ENCODE measurements at regions of chr19 and their contacts with region 1.

Region 1: DNA sequence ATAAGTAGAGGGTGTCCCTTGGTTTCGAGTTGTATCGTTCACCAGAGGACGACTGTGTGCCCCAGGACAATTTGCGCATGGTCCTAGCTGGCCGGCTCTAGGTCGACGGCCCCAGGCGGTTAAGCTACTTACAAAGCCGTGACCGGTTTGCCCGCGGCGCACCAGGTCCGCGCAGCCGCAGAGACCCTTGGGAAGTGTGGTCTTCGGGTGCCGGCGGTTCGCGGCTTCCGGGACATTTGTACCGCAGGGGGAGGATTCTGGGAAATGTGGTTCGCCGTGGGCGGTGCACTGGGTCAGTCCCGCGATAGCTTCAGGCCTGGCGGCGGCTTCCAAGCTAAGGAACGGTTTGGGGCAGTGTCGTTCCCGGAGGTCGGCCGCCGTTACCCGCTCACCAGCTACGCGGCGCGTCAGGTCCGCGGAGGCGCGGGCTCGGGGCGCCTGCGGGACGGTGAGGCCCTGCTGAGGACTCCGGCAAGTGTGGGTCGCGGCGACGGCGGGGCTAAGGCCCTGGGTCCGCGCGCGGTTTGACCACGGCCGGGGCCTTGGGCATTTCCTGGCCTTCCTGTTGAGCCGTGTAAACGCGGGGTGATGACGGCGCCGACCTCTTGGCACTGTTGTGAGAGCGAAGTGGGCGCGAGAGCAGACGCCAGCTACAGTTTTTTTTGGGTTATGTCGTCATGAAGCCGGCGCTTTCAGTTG is at the start of gene ZNF302:
- DNase-seq: peak in 1 of 2 donors; percentile 98
- H3K4me3 ChIP-seq: peak within 1 kb of the TSS; percentile 75 to 85
- H3K27ac ChIP-seq: peak within 1 kb of the TSS; percentile 93
- H3K4me1 ChIP-seq: peaks cover 29% of the 10 kb centered on the region
- H3K27me3 ChIP-seq: no peaks in the 10 kb centered on the region
- CTCF ChIP-seq: peak in 1 of 3 experiments; percentile 8
- POLR2A ChIP-seq: peak in 1 of 2 donors; percentile 21
- total RNA-seq, gene ZNF302: 17.2 TPM

Region 2: GRCh38 chr19:34712395-34713261 is 35.1 kb after region 1 on chr19:
- intact Hi-C with region 1: no loop called
- DNase-seq: no peak
- H3K4me3 ChIP-seq: no peak overlapping the region
- H3K27ac ChIP-seq: no peak overlapping the region
- H3K4me1 ChIP-seq: no peaks in the 10 kb centered on the region
- H3K27me3 ChIP-seq: no peaks in the 10 kb centered on the region
- CTCF ChIP-seq: peak; percentile 71 to 96 (median 84)
- POLR2A ChIP-seq: no peak

Region 3: DNA sequence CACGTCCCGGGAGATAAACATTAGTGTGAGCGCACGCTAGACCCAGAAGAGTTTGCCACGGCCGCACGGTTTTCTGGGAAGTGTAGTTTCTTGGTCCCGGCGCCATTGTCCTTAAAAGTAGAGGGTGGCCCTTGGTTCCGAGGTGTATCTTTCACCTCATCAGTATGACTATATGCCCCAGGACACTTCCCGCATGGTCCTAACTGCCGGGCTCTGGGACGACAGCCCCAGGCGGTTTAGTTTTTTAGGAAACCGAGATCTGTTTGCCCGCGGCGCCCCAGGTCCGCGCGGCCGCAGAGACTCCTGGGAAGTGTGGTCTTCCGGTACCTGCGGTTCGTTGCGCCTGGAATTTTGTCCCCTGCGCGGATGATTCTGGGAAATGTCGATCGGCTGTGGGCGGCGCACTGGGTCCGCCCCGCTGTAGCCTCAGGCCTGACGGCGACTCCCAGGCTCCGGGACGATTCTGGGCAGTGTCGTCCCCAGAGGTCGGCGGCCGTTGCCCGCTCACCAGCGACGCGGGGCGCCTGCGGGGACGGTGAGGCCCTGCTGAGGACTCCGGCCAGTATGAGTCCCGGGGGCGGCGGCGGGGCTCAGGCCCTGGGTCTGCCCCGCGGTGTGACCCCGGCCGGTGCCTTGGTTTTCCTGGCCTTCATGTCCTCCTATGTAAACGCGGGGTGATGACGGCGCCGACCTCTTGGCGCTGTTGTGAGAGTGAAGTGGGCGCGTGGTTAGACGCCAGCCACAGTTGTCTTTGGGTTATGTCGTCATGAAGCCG is 56.5 kb after region 1 on chr19 and contains the start of gene ZNF181:
- intact Hi-C with region 1: loop called (anchors 2 kb)
- DNase-seq: peak in 1 of 2 donors; percentile 92
- H3K4me3 ChIP-seq: peak within 1 kb of the TSS; percentile 69 to 74
- H3K27ac ChIP-seq: peak within 1 kb of the TSS; percentile 96
- H3K4me1 ChIP-seq: peaks cover 32% of the 10 kb centered on the region
- H3K27me3 ChIP-seq: no peaks in the 10 kb centered on the region
- CTCF ChIP-seq: no peak
- POLR2A ChIP-seq: peak in 1 of 2 donors; percentile 6
- total RNA-seq, gene ZNF181: 25.5 TPM

Region 4: DNA sequence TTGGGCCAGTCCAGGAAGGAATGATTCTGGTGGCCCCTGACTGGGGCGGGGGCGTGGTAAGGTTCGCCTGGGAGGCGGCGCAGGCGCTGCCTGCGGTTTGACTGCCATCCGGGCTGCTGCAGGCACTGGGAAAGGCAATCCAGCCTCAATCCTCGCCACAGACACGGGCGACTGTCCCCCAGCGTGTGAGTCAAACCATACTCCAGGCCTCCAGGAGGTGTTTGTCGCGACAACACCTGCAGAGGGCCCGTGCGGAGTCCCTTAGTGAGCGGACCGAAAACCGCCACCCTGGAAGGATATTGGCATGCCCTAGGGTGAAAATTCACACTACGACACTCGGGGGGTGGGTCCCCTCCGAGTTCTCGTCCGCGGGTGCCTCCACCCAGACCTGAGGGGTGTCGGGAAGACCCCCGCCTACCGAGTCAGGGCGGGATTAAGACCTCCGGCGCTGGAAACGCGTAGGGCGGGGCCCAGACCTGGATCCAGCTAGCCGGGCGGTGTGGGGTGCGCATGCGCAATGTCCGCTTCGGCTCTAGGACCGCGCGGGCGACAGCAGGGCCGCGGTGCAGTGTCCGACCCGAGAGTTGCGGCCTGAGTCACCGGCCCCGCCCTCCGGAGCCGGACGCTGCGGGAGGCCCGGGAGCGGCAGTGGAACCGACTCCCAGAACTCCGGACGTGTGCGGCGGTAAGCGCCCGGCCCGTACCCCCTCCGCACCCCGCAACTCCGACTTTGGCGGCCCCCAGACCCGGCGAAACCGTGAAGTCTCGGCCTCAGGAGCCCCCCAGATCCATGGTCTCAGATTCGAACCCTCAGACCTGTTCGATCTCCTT is 1462.2 kb after region 1 on chr19 and contains the start of gene CAPNS1:
- intact Hi-C with region 1: loop called (anchors 10 kb)
- DNase-seq: peak in 1 of 2 donors; percentile 94
- H3K4me3 ChIP-seq: peak within 1 kb of the TSS; percentile 82 to 88
- H3K27ac ChIP-seq: peak within 1 kb of the TSS; percentile 98
- H3K4me1 ChIP-seq: peaks cover 34% of the 10 kb centered on the region
- H3K27me3 ChIP-seq: no peaks in the 10 kb centered on the region
- CTCF ChIP-seq: peak in 1 of 3 experiments; percentile 18
- POLR2A ChIP-seq: peak; percentile 60 to 96
- total RNA-seq, gene CAPNS1: 181 TPM

Measured in vagina (tissue), 2 donors.